A673 (cell line): ENCODE measurements at regions of chrX and their contacts with region 1.

Region 1: GRCh38 chrX:96445531-96446065 is 239.0 kb upstream of the DIAPH2 start:
- DNase-seq: peak; percentile 1
- H3K4me3 ChIP-seq: no peak overlapping the region
- H3K27ac ChIP-seq: no peak overlapping the region
- H3K4me1 ChIP-seq: no peaks in the 10 kb centered on the region
- H3K27me3 ChIP-seq: peaks cover 4% of the 10 kb centered on the region
- CTCF ChIP-seq: no peak

Region 2: DNA sequence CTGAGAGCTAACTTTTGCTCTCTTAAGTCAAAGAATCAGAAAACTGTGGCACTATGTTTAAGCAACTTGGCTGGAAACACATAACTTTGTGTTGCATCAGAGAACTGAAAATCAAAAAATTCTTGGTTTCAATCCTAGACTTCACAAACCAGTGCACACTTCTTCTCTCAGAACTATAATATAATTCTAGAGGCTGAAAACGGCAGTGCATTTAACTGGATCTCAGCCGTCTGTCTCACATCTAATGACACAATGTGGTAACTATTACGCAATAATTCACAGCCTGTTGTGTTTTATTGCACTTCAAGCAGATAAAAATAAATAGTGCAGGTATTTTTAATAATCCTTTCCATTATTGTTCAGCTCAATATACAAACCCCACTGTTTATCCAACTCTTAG is 21.6 kb before region 1 on chrX:
- CTCF ChIA-PET with region 1: no interaction called
- POLR2A ChIA-PET with region 1: no interaction called
- intact Hi-C with region 1: loop called (anchors 2 kb)
- DNase-seq: no peak
- H3K4me3 ChIP-seq: no peak overlapping the region
- H3K27ac ChIP-seq: no peak overlapping the region
- H3K4me1 ChIP-seq: no peaks in the 10 kb centered on the region
- H3K27me3 ChIP-seq: no peaks in the 10 kb centered on the region
- CTCF ChIP-seq: no peak